ENCODE measurements at regions of chr15 and their contacts with region 1.

Region 1: DNA sequence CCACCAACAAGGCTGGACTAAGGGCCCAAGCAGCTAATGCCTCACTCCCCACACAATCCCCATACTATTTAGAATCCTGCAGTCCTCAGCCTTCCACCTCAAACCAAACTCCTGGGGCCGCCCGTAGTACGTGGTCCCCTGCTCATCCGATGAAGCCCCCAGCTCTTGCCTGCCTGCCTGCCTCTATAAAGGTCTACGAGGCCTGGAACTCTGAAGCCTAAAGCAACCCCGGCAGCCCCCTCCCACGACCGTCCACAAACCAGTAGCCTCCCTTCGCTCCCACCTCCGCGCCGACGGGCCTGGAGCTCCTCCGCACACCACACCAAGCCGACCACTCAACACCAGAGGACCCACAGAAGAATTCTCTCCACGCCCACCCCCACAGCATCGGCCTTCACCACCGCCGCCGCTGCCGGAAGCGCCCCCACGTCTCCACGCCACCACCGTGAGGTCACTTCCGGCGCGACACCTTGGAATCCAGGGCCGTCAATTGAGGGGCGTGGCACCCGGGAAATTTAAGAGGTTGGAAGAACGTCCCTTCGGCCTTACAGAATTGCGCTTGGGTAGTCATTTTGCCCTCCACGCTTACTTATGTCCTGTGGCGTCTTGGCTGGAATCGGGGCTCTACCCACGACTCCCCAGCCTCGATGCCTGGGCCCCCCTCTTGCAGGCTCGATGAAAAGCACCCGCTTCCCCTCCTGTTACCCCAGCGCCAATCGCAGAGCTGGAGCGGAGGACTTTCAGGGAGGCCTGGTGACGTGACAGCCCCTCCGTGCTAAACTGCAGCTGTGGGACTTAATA is at the start of gene EDC3:
- DNase-seq: peak; percentile 80
- H3K4me3 Mint-ChIP-seq: peak within 1 kb of the TSS; percentile 100
- H3K27ac Mint-ChIP-seq: peak within 1 kb of the TSS; percentile 100
- H3K4me1 Mint-ChIP-seq: peaks cover 40% of the 10 kb centered on the region
- H3K27me3 Mint-ChIP-seq: peaks cover 2% of the 10 kb centered on the region
- total RNA-seq, gene EDC3: 58.4 and 61.4 TPM in 2 replicates

Region 2: GRCh38 chr15:74598126-74598842 is 97.5 kb before region 1 on chr15:
- intact Hi-C with region 1: no loop called
- DNase-seq: peak; percentile 87
- H3K4me3 Mint-ChIP-seq: peak overlapping the region; percentile 100
- H3K27ac Mint-ChIP-seq: peak overlapping the region; percentile 100
- H3K4me1 Mint-ChIP-seq: peaks cover 19% of the 10 kb centered on the region
- H3K27me3 Mint-ChIP-seq: no peaks in the 10 kb centered on the region

Region 3: DNA sequence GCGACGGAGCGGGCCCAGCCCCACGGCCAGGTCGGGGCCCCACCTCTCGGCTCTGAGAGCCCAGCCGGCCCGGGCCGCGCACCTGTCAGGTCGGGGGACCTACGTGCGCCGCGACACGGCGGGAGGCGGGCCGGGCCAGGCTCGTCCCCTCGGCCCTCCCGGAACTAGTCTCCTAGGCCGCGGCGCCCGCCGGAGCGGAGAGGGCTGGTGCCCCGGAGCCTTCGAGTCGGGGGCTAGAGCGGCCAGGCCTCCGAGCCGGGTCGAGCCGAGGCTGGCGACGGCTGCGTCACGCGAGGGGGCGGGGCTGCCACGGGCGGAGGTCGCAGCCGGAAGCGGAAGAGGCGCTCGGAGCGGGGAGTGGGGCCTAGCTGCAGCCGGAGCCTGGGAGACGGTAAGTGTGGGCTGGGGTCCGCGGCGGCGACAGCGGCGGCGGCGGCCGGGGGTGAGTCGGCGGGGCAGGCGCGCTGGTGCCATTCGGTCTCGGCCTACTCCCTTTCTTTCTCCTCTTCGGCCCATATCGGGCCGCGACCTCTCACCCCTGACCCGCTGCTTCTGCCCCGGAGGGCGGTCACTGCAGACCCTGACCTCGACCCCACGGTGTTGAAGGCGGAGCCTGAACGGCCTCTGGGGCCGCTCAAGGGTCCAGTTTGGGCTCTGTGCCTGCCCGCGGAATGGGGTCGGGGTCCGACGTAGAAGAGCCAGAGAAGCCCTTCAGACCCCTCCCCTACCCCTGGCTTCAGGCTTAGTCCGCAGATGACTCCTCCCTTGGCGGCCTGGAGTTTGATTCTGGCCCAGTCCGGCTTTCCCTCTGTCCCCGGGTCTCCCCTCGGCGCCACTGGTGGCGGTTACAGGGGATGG is 80.1 kb before region 1 on chr15 and contains the start of gene CLK3:
- intact Hi-C with region 1: loop called (anchors 1 kb)
- DNase-seq: peak; percentile 94
- H3K4me3 Mint-ChIP-seq: peak within 1 kb of the TSS; percentile 93
- H3K27ac Mint-ChIP-seq: peak within 1 kb of the TSS; percentile 95
- H3K4me1 Mint-ChIP-seq: peaks cover 33% of the 10 kb centered on the region
- H3K27me3 Mint-ChIP-seq: peaks cover 5% of the 10 kb centered on the region
- total RNA-seq, gene CLK3: 103 and 107 TPM in 2 replicates

Region 4: GRCh38 chr15:74723754-74724334 is 28.0 kb after region 1 on chr15:
- intact Hi-C with region 1: loop called (anchors 1 kb)
- DNase-seq: no peak
- H3K4me3 Mint-ChIP-seq: no peak overlapping the region
- H3K27ac Mint-ChIP-seq: no peak overlapping the region
- H3K4me1 Mint-ChIP-seq: peaks cover 17% of the 10 kb centered on the region
- H3K27me3 Mint-ChIP-seq: peaks cover 23% of the 10 kb centered on the region

Region 5: DNA sequence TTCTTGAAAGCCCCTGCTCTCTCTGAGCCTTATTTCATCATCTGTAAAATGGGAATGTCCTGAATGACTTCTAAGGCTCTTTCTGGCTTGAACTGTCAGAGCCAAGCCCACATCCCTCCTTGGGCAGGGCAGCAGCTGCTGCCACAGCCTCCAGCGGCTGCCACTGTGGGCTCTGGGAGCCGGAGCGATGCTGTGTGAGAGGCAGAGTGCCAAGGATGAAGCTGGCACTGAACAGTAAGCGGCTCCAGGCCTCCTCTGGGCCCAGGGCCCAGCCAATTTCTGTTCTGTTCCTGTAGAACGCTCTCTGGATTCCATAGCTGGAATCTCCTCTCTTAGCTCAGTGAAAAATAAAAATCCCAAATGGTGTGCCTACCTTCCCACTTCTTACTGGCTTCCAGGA is 135.1 kb after region 1 on chr15:
- intact Hi-C with region 1: no loop called
- DNase-seq: no peak
- H3K4me3 Mint-ChIP-seq: no peak overlapping the region
- H3K27ac Mint-ChIP-seq: no peak overlapping the region
- H3K4me1 Mint-ChIP-seq: peaks cover 8% of the 10 kb centered on the region
- H3K27me3 Mint-ChIP-seq: peaks cover 10% of the 10 kb centered on the region

Region 6: GRCh38 chr15:74889883-74890664 is 194.3 kb after region 1 on chr15 and contains the start of gene MPI:
- intact Hi-C with region 1: loop called (anchors 1 kb)
- DNase-seq: peak; percentile 82
- H3K4me3 Mint-ChIP-seq: peak within 1 kb of the TSS; percentile 91
- H3K27ac Mint-ChIP-seq: peak within 1 kb of the TSS; percentile 92
- H3K4me1 Mint-ChIP-seq: peaks cover 47% of the 10 kb centered on the region
- H3K27me3 Mint-ChIP-seq: no peaks in the 10 kb centered on the region
- total RNA-seq, gene MPI: 57.7 and 62.8 TPM in 2 replicates

Region 7: GRCh38 chr15:75625542-75626347 is 929.9 kb after region 1 on chr15 and contains the start of gene SNUPN:
- intact Hi-C with region 1: loop called (anchors 2 kb)
- DNase-seq: peak; percentile 90
- H3K4me3 Mint-ChIP-seq: peak within 1 kb of the TSS; percentile 94
- H3K27ac Mint-ChIP-seq: peak within 1 kb of the TSS; percentile 100
- H3K4me1 Mint-ChIP-seq: peaks cover 38% of the 10 kb centered on the region
- H3K27me3 Mint-ChIP-seq: no peaks in the 10 kb centered on the region
- total RNA-seq, gene SNUPN: 30.8 and 34.1 TPM in 2 replicates

Measured in activated T-helper 1 cell treated with anti-CD3 and anti-CD28 coated beads, Interleukin-12 subunit alpha, Interleukin-12 subunit beta, Interleukin-2, Interleukin-4 antibody, amounts not matched to agents 30 ng/mL and 10 ng/mL and 1 ng/mL, durations not matched to agents 14 hours and 24 hours and 36 hours (primary cell).